Activated naive CD8-positive, alpha-beta T cell treated with anti-CD3 and anti-CD28 coated beads, Interleukin-2, amount 10 ng/mL, durations not matched to agents 7 days and 5 days (primary cell): ENCODE measurements at regions of chr1 and their contacts with region 1.

Region 1: GRCh38 chr1:160664573-160665051 is 17.8 kb upstream of the SLAMF1 start:
- DNase-seq: no peak
- ATAC-seq: peak; percentile 79
- H3K4me3 Mint-ChIP-seq: peak overlapping the region; percentile 74
- H3K27ac Mint-ChIP-seq: peak overlapping the region; percentile 85
- H3K4me1 Mint-ChIP-seq: peaks cover 61% of the 10 kb centered on the region
- H3K27me3 Mint-ChIP-seq: peaks cover 1% of the 10 kb centered on the region

Region 2: GRCh38 chr1:160494620-160495019 is 170.0 kb before region 1 on chr1:
- POLR2A ChIA-PET with region 1: no interaction called
- DNase-seq: no peak
- ATAC-seq: no peak
- H3K4me3 Mint-ChIP-seq: no peak overlapping the region
- H3K27ac Mint-ChIP-seq: no peak overlapping the region
- H3K4me1 Mint-ChIP-seq: no peaks in the 10 kb centered on the region
- H3K27me3 Mint-ChIP-seq: no peaks in the 10 kb centered on the region

Region 3: GRCh38 chr1:160675641-160676410 is 11.2 kb after region 1 on chr1:
- POLR2A ChIA-PET with region 1: interaction called, 12 read pairs
- DNase-seq: peak; percentile 74
- ATAC-seq: peak; percentile 72
- H3K4me3 Mint-ChIP-seq: peak overlapping the region; percentile 9
- H3K27ac Mint-ChIP-seq: peak overlapping the region; percentile 81
- H3K4me1 Mint-ChIP-seq: peaks cover 34% of the 10 kb centered on the region
- H3K27me3 Mint-ChIP-seq: no peaks in the 10 kb centered on the region